PC-9 (cell line): ENCODE measurements at regions of chr13 and their contacts with region 1.

Region 1: GRCh38 chr13:98535501-98536354 is 41.2 kb downstream of the STK24 start:
- DNase-seq: peak; percentile 5 to 61
- H3K4me3 ChIP-seq: no peak overlapping the region
- H3K27ac ChIP-seq: peak overlapping the region; percentile 59
- H3K4me1 ChIP-seq: peaks cover 23% of the 10 kb centered on the region
- H3K27me3 ChIP-seq: no peaks in the 10 kb centered on the region
- CTCF ChIP-seq: no peak

Region 2: DNA sequence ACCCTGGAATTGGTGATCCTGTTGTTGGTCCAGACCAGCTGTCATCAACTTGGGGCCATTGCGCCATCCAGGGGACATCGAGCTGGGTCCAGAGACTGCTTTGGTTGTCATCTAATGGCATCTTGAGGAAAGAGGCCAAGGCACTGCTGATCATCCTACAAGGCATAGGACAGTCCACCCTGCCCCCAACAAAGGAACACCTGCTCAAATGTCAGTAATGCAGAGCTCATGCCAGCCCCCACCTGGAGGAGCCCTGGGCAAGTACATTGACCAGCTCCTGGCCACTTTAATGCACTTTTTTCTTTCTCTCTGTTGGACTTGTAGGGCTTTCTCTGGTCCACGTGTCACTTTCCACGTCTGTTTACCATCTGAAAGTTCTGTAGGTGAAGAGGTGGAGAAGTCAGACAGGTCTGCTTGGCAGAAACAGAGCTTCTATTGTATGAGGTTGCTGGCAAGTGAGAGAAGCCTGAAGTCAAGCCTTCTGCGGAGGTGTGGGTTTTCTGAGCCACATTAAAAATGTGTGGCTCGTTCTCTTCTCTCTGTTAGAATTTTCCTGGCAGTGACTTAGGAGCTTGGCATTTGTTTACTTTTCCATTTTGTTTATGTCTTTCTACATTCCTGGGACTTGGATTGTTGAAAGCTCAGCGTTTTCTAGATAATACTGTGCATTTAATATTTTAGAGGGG is 234.6 kb before region 1 on chr13:
- CTCF ChIA-PET with region 1: no interaction called
- POLR2A ChIA-PET with region 1: interaction called, 12 read pairs
- intact Hi-C with region 1: no loop called
- DNase-seq: peak; percentile 41 to 90
- H3K4me3 ChIP-seq: peak overlapping the region; percentile 40; the same call in 1 of the 2 replicates
- H3K27ac ChIP-seq: peak overlapping the region; percentile 83
- H3K4me1 ChIP-seq: peaks cover 58% of the 10 kb centered on the region
- H3K27me3 ChIP-seq: no peaks in the 10 kb centered on the region
- CTCF ChIP-seq: no peak